K562 (cell line): ENCODE measurements at regions of chr4 and their contacts with region 1.

Region 1: DNA sequence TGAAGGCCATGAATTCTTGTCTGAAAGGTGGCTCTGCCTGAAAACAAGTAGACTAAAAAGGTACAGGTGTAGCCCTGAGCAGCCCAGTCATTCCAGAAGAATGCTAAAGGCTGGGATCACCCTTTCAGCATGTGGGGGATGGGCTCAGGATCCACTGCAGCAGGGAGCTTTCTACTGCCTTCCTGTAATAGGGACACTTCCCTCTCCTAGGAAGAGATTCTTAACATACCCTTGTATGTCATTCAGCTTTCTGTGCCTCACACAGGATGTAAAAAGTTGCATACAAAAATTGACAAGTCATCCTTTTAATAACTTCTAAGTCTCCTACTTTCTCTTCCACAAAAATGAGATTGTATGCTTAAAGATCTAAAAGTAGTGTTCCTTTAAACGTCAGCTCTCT is 123.3 kb downstream of the ZNF518B start:
- DNase-seq: no peak
- ATAC-seq: no peak
- H3K4me3 ChIP-seq: no peak overlapping the region
- H3K27ac ChIP-seq: no peak overlapping the region
- H3K4me1 ChIP-seq: peaks cover 0 to 28% of the 10 kb centered on the region in 2 experiments; a peak in 3 of 5 replicates
- H3K27me3 ChIP-seq: no peaks in the 10 kb centered on the region
- CTCF ChIP-seq: no peak
- EP300 ChIP-seq: no peak
- POLR2A ChIP-seq: no peak
- RAD21 ChIP-seq: no peak

Region 2: GRCh38 chr4:10281996-10282395 is 51.9 kb before region 1 on chr4:
- CTCF ChIA-PET with region 1: no interaction called
- POLR2A ChIA-PET with region 1: no interaction called
- in situ Hi-C with region 1: no loop called
- intact Hi-C with region 1: no loop called
- DNase-seq: no peak
- ATAC-seq: no peak
- H3K4me3 ChIP-seq: no peak overlapping the region
- H3K27ac ChIP-seq: no peak overlapping the region
- H3K4me1 ChIP-seq: peaks cover 0 to 24% of the 10 kb centered on the region in 2 experiments; a peak in 3 of 5 replicates
- H3K27me3 ChIP-seq: no peaks in the 10 kb centered on the region
- CTCF ChIP-seq: no peak
- EP300 ChIP-seq: no peak
- POLR2A ChIP-seq: no peak
- RAD21 ChIP-seq: no peak

Region 3: GRCh38 chr4:10346023-10346422 is 12.1 kb after region 1 on chr4:
- CTCF ChIA-PET with region 1: no interaction called
- POLR2A ChIA-PET with region 1: interaction called, 10 read pairs
- in situ Hi-C with region 1: no loop called
- intact Hi-C with region 1: no loop called
- DNase-seq: peak in 1 of 4 experiments; percentile 19
- ATAC-seq: peak; percentile 64
- H3K4me3 ChIP-seq: no peak overlapping the region
- H3K27ac ChIP-seq: peak overlapping the region; percentile 24; the same call in 2 of the 3 replicates
- H3K4me1 ChIP-seq: peaks cover 12 to 34% of the 10 kb centered on the region in 2 experiments
- H3K27me3 ChIP-seq: no peaks in the 10 kb centered on the region
- CTCF ChIP-seq: no peak
- EP300 ChIP-seq: peak; percentile 54
- POLR2A ChIP-seq: no peak
- RAD21 ChIP-seq: no peak

Region 4: DNA sequence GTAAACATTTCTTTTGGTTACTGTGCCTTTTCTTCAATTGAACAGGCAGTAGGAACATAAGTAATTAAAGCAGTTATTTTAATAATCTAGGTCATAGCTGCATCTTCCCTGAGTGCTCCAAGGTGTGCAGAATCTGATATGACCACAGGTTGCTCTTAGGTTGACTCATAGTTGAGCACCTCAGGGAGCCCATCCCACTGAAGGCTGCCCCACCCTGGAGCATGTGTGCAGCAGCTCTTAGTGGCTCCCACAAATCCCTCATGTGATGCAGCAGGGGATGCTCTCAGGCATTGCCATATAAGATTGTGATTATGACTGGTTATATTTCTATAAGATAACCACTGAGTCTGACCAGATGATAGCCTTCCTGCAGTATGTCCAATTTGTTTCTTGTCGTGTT is 51.0 kb after region 1 on chr4:
- CTCF ChIA-PET with region 1: no interaction called
- POLR2A ChIA-PET with region 1: no interaction called
- in situ Hi-C with region 1: no loop called
- intact Hi-C with region 1: no loop called
- DNase-seq: no peak
- ATAC-seq: peak; percentile 34; the same call in 1 of the 3 replicates
- H3K4me3 ChIP-seq: no peak overlapping the region
- H3K27ac ChIP-seq: no peak overlapping the region
- H3K4me1 ChIP-seq: peaks cover 4 to 18% of the 10 kb centered on the region in 2 experiments; a peak in 4 of 5 replicates
- H3K27me3 ChIP-seq: no peaks in the 10 kb centered on the region
- CTCF ChIP-seq: no peak
- EP300 ChIP-seq: no peak
- POLR2A ChIP-seq: no peak
- RAD21 ChIP-seq: no peak